ENCODE measurements at regions of chr1 and their contacts with region 1.

Region 1: GRCh38 chr1:46477153-46477929 is 12.3 kb upstream of the DMBX1 start:
- DNase-seq: peak; percentile 81
- ATAC-seq: peak; percentile 83
- H3K4me3 Mint-ChIP-seq: no peak overlapping the region
- H3K27ac Mint-ChIP-seq: no peak overlapping the region
- H3K4me1 Mint-ChIP-seq: no peaks in the 10 kb centered on the region
- H3K27me3 Mint-ChIP-seq: peaks cover 41% of the 10 kb centered on the region

Region 2: GRCh38 chr1:46522184-46522968 is 45.0 kb after region 1 on chr1:
- CTCF ChIA-PET with region 1: interaction called, 94 read pairs
- DNase-seq: peak; percentile 60
- ATAC-seq: peak; percentile 91
- H3K4me3 Mint-ChIP-seq: no peak overlapping the region
- H3K27ac Mint-ChIP-seq: peak overlapping the region; percentile 71
- H3K4me1 Mint-ChIP-seq: peaks cover 32% of the 10 kb centered on the region
- H3K27me3 Mint-ChIP-seq: peaks cover 28% of the 10 kb centered on the region

Region 3: GRCh38 chr1:46533179-46533864 is 56.0 kb after region 1 on chr1:
- CTCF ChIA-PET with region 1: interaction called, 94 read pairs
- DNase-seq: peak; percentile 56
- ATAC-seq: peak; percentile 65
- H3K4me3 Mint-ChIP-seq: peak overlapping the region; percentile 68
- H3K27ac Mint-ChIP-seq: peak overlapping the region; percentile 7
- H3K4me1 Mint-ChIP-seq: peaks cover 33% of the 10 kb centered on the region
- H3K27me3 Mint-ChIP-seq: peaks cover 44% of the 10 kb centered on the region